Dendritic cell treated with granulocyte-macrophage colony-stimulating factor and Interleukin-4, amounts not matched to agents 40 ng/mL and 50 ng/mL, for 4 days (primary cell): ENCODE measurements at regions of chr9 and their contacts with region 1.

Region 1: DNA sequence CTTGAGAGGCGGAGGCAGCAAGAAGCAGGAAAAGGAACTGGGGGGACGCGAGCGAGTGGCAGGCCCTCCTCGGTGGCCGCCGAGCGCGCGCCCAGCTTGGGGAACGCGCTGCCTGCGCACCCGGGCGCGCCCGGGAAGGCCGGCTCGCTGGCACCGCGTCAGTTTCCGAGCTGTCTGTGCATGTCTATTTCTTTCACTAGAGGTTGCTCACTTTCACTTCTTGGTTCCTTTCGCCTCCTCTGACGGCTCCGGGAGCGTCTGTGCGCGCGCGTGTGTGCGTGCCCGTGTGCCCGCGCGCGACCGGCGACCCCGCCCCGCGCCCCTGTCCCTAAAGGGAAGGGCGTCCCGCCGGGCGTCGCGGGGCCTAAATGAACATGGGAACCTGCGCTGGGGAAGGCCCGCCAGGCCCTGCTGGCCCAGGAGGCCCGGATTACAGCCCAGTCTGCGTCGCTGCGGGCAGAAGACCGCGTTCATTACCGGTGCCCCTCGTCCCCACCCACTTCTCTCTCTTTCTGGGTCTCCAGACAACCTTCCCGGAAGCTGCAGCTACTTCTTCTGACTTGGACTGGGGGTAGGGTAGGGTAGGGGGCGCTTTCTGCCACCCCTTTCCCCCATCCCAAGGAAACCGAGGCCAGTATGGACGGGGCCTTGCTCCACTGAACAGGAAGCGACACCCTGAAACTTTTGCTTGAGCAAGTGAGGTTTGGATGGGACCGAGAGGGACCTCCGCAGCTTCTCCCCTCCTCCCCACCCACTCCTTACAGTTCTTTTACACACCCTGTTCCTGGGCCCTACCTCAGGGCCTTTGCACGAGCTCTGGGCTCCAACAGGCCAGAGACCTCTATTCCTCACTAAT is 205.7 kb upstream of the IER5L start:
- H3K4me3 Mint-ChIP-seq: peak overlapping the region; percentile 74
- H3K27ac Mint-ChIP-seq: peak overlapping the region; percentile 95
- H3K4me1 Mint-ChIP-seq: peaks cover 37% of the 10 kb centered on the region
- H3K27me3 Mint-ChIP-seq: peaks cover 4% of the 10 kb centered on the region

Region 2: DNA sequence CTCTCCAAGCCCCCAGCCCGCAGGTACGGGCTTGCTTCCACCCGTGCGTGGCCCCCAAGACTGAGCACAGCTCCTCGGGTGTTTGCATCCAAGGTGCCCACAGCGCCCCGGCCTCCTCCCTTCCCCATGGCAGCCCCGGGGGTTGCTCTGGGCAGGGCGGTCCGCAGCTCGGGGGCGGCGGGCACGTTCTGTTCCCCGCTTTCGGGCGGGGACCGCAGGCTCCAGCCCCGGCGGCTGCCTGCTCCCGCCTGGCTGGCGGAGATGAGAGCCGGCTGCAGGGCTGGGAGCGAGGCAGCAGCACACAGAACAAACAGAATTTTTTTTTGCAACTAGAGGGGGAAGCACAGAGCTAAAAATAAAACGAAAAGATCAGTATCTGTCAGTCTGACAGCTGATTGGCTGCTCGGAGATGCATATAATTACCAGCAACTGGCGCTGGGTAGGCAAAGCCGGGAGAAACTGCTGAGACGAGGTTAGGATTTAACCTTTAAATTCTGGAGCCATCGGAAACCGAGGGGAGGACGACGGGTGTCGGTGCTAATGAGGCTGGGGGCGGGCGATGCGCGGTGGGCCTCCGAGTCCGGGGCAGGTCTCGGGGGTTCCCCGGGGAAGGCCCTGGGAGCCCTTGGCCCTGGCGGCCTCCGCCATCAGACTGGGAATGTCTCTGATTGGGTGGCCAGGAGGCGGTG is 63.1 kb before region 1 on chr9:
- intact Hi-C with region 1: loop called (anchors 2 kb)
- H3K4me3 Mint-ChIP-seq: peak overlapping the region; percentile 83
- H3K27ac Mint-ChIP-seq: peak overlapping the region; percentile 90
- H3K4me1 Mint-ChIP-seq: peaks cover 78% of the 10 kb centered on the region
- H3K27me3 Mint-ChIP-seq: no peaks in the 10 kb centered on the region

Region 3: DNA sequence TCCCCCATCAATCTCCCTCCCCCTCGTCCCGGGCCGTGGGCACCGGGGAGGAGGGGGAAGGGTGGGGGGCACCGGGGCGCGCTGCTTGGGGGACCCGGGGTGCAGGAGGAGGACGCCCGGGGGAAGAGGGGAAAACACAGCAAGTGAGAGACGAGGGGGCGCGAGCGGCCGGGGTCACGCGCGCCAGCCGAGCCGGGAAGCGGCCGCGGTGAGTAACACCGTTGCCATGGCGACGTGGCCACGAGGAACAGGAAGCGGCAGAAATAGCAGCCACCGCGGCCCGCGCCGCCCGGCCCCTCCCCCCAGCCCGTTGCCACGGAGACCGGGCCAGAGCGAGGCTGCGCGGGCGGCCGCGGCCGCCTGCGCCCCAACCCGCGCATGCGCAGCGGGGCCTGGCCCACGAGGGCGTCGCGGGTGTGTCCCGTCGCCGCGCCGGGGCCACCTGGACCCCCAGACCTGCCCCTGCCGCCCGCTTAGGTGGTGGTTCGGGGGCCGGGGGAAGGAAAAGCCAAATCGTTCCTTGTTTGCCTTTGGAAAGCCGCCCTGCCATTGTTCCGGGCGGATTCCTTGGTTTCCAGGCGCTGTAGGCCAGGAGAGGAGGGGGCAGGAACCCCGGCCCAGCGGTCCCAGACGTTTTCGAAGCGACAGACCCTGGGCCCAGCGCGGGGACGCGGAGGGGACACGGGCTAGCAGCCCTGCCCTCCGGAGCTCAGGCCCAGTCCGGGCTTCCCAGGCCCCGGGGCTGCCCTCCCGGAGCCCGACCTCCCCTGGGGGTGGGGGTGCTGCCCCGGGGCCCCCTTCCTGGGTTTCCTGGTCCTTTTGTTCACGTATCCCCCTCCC is 30.0 kb after region 1 on chr9:
- intact Hi-C with region 1: loop called (anchors 5 kb)
- H3K4me3 Mint-ChIP-seq: peak overlapping the region; percentile 82
- H3K27ac Mint-ChIP-seq: peak overlapping the region; percentile 93
- H3K4me1 Mint-ChIP-seq: peaks cover 45% of the 10 kb centered on the region
- H3K27me3 Mint-ChIP-seq: no peaks in the 10 kb centered on the region

Region 4: GRCh38 chr9:129569502-129570449 is 186.0 kb after region 1 on chr9:
- intact Hi-C with region 1: no loop called
- H3K4me3 Mint-ChIP-seq: peak overlapping the region; percentile 21
- H3K27ac Mint-ChIP-seq: peak overlapping the region; percentile 41
- H3K4me1 Mint-ChIP-seq: peaks cover 37% of the 10 kb centered on the region
- H3K27me3 Mint-ChIP-seq: peaks cover 50% of the 10 kb centered on the region